ENCODE measurements at regions of chr11 and their contacts with region 1.

Region 1: GRCh38 chr11:116853461-116854073 is 16.1 kb upstream of the APOA1 start:
- DNase-seq: peak; percentile 74
- ATAC-seq: peak; percentile 94
- H3K4me3 Mint-ChIP-seq: peak overlapping the region; percentile 23
- H3K27ac Mint-ChIP-seq: peak overlapping the region; percentile 87
- H3K4me1 Mint-ChIP-seq: peaks cover 58% of the 10 kb centered on the region
- H3K27me3 Mint-ChIP-seq: no peaks in the 10 kb centered on the region
- CTCF ChIP-seq: no peak

Region 2: DNA sequence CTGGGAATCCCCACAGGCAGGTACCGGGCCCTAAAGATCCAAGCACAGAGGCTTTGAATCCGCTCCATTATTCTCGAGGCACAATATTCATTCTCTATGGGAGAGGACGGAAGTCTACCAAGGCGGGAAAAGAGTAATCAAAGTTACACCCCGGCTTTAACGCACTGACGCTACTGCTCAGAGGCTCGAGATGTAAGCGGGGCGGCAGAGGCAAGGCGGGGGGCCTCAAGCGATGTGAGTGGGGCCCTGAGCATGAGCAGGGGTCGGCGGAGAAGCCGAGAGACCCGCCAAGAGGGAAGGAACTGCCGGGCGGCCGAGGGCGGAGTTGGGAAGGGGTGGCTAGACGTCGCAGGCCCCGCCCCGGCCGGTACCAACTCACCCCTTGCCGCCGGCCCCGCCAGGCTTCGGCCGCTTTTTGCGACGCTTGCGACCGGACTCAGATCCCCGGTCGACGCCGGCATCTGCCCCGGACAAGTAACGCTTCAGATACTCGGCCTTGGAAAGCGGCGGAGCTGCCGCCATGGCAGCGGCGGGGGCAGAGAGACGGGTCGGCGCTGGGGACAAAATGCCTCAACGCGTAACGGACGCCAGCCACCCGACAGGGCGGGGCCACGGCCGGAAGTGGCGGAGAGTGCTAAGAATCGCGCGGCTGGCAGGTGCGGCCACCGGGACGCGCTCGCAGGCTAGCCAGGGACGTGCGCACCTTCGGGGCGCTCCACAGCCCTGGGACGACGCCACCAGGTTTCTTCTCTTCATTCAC is 80.9 kb before region 1 on chr11 and contains the start of gene BUD13:
- CTCF ChIA-PET with region 1: interaction called, 3 read pairs
- POLR2A ChIA-PET with region 1: interaction called, 3 read pairs
- intact Hi-C with region 1: loop called (anchors 5 kb)
- DNase-seq: peak; percentile 95
- ATAC-seq: peak; percentile 94
- H3K4me3 Mint-ChIP-seq: peak within 1 kb of the TSS; percentile 92
- H3K27ac Mint-ChIP-seq: peak within 1 kb of the TSS; percentile 98
- H3K4me1 Mint-ChIP-seq: peaks cover 51% of the 10 kb centered on the region
- H3K27me3 Mint-ChIP-seq: no peaks in the 10 kb centered on the region
- CTCF ChIP-seq: no peak
- total RNA-seq, gene BUD13: 26.6 to 28.6 TPM

Region 3: DNA sequence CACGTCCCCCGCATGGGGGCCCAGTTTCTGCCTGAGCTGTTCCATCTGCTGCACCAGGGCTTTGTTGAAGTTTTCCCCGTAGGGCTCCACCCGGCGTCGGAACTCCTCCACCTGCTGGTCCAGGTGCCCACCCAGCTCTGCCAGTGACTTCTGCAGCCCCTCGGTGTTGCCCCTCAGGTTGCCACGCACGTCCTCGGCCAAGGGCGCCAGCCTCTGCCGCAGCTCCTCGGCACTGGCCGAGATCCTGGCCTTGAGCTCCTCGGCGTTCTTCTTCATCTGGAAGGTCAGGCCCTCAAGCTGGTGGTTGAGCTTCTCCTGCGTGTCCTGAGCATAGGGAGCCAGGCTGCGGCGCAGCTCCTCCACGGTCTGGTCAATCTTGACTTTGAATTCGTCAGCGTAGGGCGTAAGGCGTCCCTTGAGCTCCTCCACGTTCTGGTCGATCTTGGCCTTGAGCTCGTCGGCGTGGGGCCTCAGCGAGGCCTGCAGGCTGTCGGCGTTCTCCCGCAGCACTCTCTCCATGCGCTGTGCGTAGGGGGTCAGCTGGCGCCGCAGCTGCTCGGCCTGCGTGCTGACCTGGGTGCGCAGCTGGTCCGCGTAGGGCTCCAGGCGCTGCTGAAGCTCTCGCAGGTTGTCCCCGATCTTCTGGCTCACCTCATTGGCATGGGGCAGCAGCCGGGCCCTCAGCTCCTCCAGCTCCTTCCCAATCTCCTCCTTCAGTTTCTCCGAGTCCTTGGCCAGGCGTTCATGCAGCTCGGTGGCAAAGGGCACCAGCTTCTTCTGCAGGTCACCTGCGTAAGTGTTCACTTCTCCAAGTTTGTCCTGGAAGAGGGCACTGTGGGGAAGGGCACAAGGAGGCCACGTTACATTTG is 32.3 kb before region 1 on chr11:
- CTCF ChIA-PET with region 1: no interaction called
- POLR2A ChIA-PET with region 1: no interaction called
- intact Hi-C with region 1: no loop called
- DNase-seq: no peak
- ATAC-seq: no peak
- H3K4me3 Mint-ChIP-seq: no peak overlapping the region
- H3K27ac Mint-ChIP-seq: no peak overlapping the region
- H3K4me1 Mint-ChIP-seq: no peaks in the 10 kb centered on the region
- H3K27me3 Mint-ChIP-seq: no peaks in the 10 kb centered on the region
- CTCF ChIP-seq: no peak

Region 4: DNA sequence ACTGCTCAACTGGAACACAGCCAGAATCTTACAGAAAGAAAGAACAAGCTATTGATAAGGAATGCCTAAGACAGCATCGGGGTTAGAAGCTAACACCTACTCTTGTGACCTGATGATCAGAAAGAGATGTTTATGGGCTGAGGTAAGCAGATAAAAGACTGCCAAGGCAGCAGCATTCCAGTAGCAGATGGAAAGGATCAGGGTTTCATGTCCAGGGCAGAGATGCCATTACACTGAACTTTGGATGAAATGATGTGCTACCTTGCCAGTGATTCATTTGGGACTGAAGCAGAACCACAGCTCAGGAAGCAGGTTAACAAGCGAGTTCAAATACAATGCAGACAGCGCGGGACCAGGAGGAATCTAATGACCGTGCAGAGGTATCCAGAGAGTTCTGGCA is 11.0 kb after region 1 on chr11:
- CTCF ChIA-PET with region 1: interaction called, 4 read pairs
- POLR2A ChIA-PET with region 1: interaction called, 15 read pairs
- intact Hi-C with region 1: no loop called
- DNase-seq: no peak
- ATAC-seq: no peak
- H3K4me3 Mint-ChIP-seq: no peak overlapping the region
- H3K27ac Mint-ChIP-seq: no peak overlapping the region
- H3K4me1 Mint-ChIP-seq: peaks cover 2% of the 10 kb centered on the region
- H3K27me3 Mint-ChIP-seq: no peaks in the 10 kb centered on the region
- CTCF ChIP-seq: no peak

Measured in activated CD8-positive, alpha-beta T cell treated with anti-CD3 and anti-CD28 coated beads for 36 hours (primary cell).